Vagina (tissue), 2 donors: ENCODE measurements at regions of chr17 and their contacts with region 1.

Region 1: GRCh38 chr17:64491034-64491859 is 5.6 kb downstream of the POLG2 start:
- DNase-seq: no peak
- H3K4me3 ChIP-seq: no peak overlapping the region
- H3K27ac ChIP-seq: no peak overlapping the region
- H3K4me1 ChIP-seq: peaks cover 24% of the 10 kb centered on the region
- H3K27me3 ChIP-seq: no peaks in the 10 kb centered on the region
- CTCF ChIP-seq: peak in 1 of 3 experiments; percentile 43
- POLR2A ChIP-seq: no peak

Region 2: GRCh38 chr17:64420143-64420971 is 70.9 kb before region 1 on chr17:
- intact Hi-C with region 1: loop called (anchors 5 kb)
- DNase-seq: no peak
- H3K4me3 ChIP-seq: no peak overlapping the region
- H3K27ac ChIP-seq: no peak overlapping the region
- H3K4me1 ChIP-seq: peaks cover 16% of the 10 kb centered on the region
- H3K27me3 ChIP-seq: no peaks in the 10 kb centered on the region
- CTCF ChIP-seq: peak; percentile 42 to 75 (median 69)
- POLR2A ChIP-seq: no peak